Right ventricle myocardium inferior (tissue), 1 donor: ENCODE measurements at regions of chr21 and their contacts with region 1.

Region 1: GRCh38 chr21:36149788-36150711 is 6.6 kb upstream of the DOP1B start:
- DNase-seq: no peak
- ATAC-seq: peak; percentile 86

Region 2: DNA sequence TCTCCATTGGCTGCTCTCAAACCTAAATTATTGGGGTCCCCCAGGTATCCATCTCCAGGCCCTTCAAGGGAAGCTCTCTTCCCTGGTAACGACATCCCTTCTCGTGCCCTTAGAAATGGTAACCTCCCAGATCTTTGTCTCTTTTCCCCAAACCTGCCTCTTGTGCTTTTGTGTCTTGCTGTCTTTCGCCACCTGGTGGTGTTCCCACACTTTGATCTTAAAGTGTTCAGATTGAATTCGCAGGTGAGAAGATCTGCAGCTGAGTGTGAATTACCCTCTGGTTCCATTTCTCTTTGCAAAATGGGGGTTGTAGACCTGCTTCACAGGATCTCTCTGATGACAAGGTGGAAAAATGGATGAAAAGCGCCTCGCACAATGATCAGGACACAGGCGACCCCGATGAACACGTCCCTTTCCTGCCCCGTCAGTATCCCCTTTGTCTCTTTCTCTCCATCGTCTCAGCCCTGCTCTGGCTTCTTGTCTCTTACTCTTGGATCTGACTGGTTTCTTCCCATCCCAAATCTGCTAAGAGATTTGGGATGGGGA is 59.6 kb after region 1 on chr21:
- intact Hi-C with region 1: loop called (anchors 5 kb)
- DNase-seq: no peak
- ATAC-seq: no peak